Transverse colon (tissue), 4 donors: ENCODE measurements at regions of chr15 and their contacts with region 1.

Region 1: DNA sequence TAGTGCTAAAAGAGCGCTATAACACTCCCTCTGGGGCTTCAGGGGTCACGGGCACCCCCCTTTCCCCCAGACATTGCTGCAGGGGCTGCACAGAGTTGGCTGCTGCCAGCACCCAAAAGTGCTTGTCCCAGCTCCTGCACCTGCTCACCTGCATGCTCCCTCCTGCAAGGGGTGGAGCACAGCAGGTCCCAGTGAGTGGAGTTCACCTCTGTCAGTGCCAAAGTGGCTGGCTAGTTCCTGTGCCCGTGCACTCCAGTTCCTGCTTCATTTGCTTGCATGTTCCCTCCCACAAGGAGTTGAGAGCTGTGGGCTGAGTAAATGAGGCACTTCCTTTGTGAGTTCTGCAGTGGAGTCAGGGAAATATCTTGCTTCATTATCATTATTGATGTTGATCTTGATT is 476.9 kb downstream of the SQOR start:
- DNase-seq: no peak
- H3K4me3 ChIP-seq: no peak overlapping the region
- H3K27ac ChIP-seq: no peak overlapping the region
- H3K4me1 ChIP-seq: no peaks in the 10 kb centered on the region
- H3K27me3 ChIP-seq: no peaks in the 10 kb centered on the region
- CTCF ChIP-seq: no peak
- EP300 ChIP-seq: no peak
- POLR2A ChIP-seq: no peak

Region 2: DNA sequence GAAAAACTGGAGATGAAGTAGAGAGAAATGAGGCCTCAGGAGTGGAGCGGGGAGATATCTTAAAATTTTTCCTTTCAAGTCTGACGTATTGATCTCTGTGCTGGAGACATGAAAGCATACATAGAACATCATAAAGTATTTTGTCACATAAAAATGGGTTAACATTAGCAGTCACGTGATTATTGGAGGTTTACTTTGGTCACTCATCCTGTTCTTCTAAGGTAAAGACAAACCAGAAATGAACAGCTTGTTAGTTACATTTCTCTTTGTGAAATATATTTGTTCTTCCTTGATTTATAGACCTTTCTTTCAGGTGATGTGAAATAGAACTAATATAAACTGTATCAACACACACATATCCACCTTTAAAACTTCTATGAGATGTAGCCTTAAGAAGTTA is 152.8 kb before region 1 on chr15:
- in situ Hi-C with region 1: no loop called
- intact Hi-C with region 1: no loop called
- DNase-seq: no peak
- H3K4me3 ChIP-seq: no peak overlapping the region
- H3K27ac ChIP-seq: no peak overlapping the region
- H3K4me1 ChIP-seq: no peaks in the 10 kb centered on the region
- H3K27me3 ChIP-seq: no peaks in the 10 kb centered on the region
- CTCF ChIP-seq: no peak
- EP300 ChIP-seq: no peak
- POLR2A ChIP-seq: no peak

Region 3: DNA sequence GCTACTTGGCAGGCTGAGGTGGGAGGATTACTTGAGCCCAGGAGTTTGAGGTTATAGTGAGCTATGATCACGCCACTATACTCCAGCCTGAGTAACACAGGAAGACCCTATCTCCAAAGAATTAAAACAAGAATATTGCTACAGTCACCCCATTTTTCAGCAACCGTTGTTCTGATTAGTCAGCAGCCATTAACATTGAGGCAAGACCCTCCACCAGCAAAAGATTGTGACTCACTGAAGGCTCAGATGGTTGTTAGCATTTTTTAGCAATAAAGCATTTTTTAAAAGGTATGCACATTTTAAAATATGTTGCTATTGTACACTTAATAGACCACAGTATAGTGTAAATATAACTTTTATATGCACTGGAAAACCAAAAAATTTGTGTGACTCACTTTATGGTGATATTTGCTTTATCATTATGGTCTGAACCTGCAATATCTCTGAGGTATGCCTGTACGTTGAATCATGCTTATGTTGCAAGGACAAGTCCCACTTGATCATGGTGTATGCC is 15.7 kb after region 1 on chr15:
- in situ Hi-C with region 1: no loop called
- intact Hi-C with region 1: loop called (anchors 2 kb)
- DNase-seq: no peak
- H3K4me3 ChIP-seq: no peak overlapping the region
- H3K27ac ChIP-seq: no peak overlapping the region
- H3K4me1 ChIP-seq: no peaks in the 10 kb centered on the region
- H3K27me3 ChIP-seq: no peaks in the 10 kb centered on the region
- CTCF ChIP-seq: no peak
- EP300 ChIP-seq: no peak
- POLR2A ChIP-seq: no peak

Region 4: DNA sequence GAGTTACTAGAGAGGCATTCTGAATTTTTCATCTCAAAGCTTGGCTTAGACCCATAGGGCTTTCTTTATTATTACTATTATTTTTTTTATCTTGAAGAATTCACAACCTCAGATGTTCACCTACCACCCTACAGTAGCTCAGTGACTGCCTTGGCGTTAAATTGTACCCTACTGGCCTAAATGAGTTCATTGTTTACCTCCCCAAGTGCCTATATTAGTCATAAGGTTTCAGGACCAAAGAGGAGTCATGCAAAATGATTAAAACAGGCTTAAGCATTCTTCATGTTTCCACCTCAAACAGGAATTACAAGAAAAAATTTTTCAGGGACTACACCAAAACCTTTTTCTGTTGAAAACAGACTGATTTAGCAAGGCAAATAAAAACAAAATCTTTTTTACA is 274.6 kb after region 1 on chr15:
- in situ Hi-C with region 1: no loop called
- intact Hi-C with region 1: no loop called
- DNase-seq: no peak
- H3K4me3 ChIP-seq: no peak overlapping the region
- H3K27ac ChIP-seq: no peak overlapping the region
- H3K4me1 ChIP-seq: no peaks in the 10 kb centered on the region
- H3K27me3 ChIP-seq: no peaks in the 10 kb centered on the region
- CTCF ChIP-seq: no peak
- EP300 ChIP-seq: no peak
- POLR2A ChIP-seq: no peak